Tibial artery (tissue), 4 donors: ENCODE measurements at regions of chr1 and their contacts with region 1.

Region 1: GRCh38 chr1:20696397-20697329 is 21.1 kb downstream of the KIF17 start:
- DNase-seq: peak; percentile 88 to 92
- H3K4me3 ChIP-seq: peak overlapping the region; percentile 57 to 74
- H3K27ac ChIP-seq: peak overlapping the region; percentile 82 to 84
- H3K4me1 ChIP-seq: peaks cover 0 to 12% (median 10%) of the 10 kb centered on the region in 4 donors
- H3K27me3 ChIP-seq: no peaks in the 10 kb centered on the region
- CTCF ChIP-seq: peak; percentile 84 to 86

Region 2: GRCh38 chr1:20615946-20616846 is 80.5 kb before region 1 on chr1:
- intact Hi-C with region 1: no loop called
- DNase-seq: no peak
- H3K4me3 ChIP-seq: no peak overlapping the region
- H3K27ac ChIP-seq: no peak overlapping the region
- H3K4me1 ChIP-seq: peaks cover 0 to 14% (median 4%) of the 10 kb centered on the region in 4 donors
- H3K27me3 ChIP-seq: no peaks in the 10 kb centered on the region
- CTCF ChIP-seq: no peak

Region 3: DNA sequence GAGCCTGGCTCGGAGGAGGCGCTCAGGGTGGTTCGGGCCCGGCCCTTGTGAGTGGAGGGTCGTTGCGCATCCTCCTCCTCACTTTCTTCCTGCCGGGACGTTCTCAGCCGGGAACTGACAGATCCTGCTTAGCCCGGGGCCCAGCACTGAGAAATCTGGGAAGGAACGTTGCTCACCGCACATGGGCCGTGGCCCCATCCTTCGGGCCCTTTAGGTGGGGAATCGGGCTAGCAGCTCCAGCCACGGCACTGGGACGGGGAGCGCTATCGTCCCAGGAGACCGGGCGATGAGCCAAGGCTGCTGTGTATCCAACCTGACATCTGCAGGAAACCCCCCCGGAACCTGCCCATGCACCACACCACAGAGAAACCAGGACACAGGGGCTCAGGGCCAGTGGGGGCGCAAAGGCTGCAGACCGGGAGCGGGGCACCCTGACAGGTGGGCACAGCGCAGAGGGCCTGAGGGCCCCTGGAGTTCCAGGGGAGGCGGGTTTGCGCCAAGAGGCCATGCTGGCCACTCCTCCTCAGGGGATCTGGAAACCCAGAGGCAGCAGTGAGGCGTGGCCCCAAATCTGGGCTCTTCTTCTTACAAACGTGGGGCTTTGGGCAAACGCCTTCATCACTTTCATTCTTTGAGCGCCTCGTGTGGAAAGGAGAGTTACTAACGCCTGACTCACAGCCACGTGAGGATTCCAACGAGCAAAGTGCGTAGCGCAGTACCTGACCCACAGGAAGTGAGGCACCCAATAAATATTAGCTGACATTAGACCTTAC is 36.1 kb after region 1 on chr1 and contains the start of gene SH2D5:
- intact Hi-C with region 1: loop called (anchors 2 kb)
- DNase-seq: peak; percentile 89
- H3K4me3 ChIP-seq: peak within 1 kb of the TSS; percentile 53 to 58
- H3K27ac ChIP-seq: peak within 1 kb of the TSS; percentile 60 to 63
- H3K4me1 ChIP-seq: peaks cover 0 to 39% (median 22%) of the 10 kb centered on the region in 4 donors
- H3K27me3 ChIP-seq: peaks cover 0 to 42% of the 10 kb centered on the region in 2 donors
- CTCF ChIP-seq: peak; percentile 24 to 34

Region 4: GRCh38 chr1:20767271-20767670 is 70.6 kb after region 1 on chr1:
- intact Hi-C with region 1: no loop called
- DNase-seq: no peak
- H3K4me3 ChIP-seq: no peak overlapping the region
- H3K27ac ChIP-seq: no peak overlapping the region
- H3K4me1 ChIP-seq: no peaks in the 10 kb centered on the region
- H3K27me3 ChIP-seq: no peaks in the 10 kb centered on the region
- CTCF ChIP-seq: no peak

Region 5: GRCh38 chr1:21200767-21201166 is 504.1 kb after region 1 on chr1:
- intact Hi-C with region 1: loop called (anchors 2 kb)
- DNase-seq: no peak
- H3K4me3 ChIP-seq: no peak overlapping the region
- H3K27ac ChIP-seq: no peak overlapping the region
- H3K4me1 ChIP-seq: no peaks in the 10 kb centered on the region
- H3K27me3 ChIP-seq: peaks cover 0 to 2% of the 10 kb centered on the region in 2 donors
- CTCF ChIP-seq: no peak

Region 6: GRCh38 chr1:21334214-21335087 is 637.8 kb after region 1 on chr1:
- intact Hi-C with region 1: no loop called
- DNase-seq: peak; percentile 82 to 86
- H3K4me3 ChIP-seq: peak overlapping the region; percentile 43 to 44
- H3K27ac ChIP-seq: peak overlapping the region; percentile 95 to 96
- H3K4me1 ChIP-seq: peaks cover 5 to 100% (median 94%) of the 10 kb centered on the region in 4 donors
- H3K27me3 ChIP-seq: no peaks in the 10 kb centered on the region
- CTCF ChIP-seq: peak; percentile 87 to 88